ENCODE measurements at regions of chr1 and their contacts with region 1.

Region 1: DNA sequence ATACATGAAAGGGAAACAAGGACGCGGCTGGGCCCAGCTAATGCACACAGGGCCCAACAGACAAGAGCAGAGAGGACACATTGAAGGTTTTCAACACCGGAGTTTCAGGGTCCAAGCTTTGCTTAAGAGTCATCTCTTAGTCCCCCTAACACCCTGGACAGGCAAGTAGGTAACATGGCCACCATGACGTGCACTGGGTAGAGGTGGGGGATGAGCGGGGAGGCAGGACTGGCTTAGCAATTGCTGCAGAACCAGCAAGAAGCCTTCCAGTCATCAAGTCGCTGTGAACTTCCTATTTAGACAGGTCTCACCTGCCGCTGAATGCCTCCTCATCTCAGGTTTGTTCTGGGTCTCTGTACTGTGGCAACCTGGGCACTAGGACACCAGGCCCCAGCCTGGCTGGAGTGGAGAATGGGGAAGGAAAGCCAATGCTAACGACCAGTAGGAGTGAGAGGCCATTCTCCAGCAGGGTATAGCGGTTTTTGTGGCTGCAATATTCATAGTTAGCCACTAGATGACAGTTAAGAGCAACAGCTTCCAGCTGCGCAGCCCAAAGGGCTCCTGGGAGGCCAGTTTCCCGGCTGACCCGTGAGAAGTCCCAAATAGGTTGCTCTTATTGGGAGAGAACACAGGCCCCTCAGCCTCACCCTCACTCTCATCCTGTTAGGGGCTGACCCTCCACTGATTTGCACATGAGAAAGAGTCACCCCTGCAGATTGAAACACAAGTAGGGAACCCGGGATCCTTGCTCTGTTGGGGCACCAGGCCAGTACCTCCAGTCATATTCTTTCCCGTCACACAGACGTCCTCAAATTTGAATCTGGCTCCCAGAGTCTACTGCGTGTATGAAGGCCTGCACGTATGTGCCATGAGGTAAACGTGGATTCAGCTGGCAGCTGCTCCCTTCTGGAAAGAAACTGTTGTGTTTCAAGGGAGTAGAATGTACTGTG is 6.0 kb upstream of the PIGC start:
- DNase-seq: peak; percentile 36 to 70
- H3K4me3 ChIP-seq: no peak overlapping the region
- H3K27ac ChIP-seq: no peak overlapping the region
- H3K4me1 ChIP-seq: no peaks in the 10 kb centered on the region
- H3K27me3 ChIP-seq: peaks cover 0 to 2% (median 0%) of the 10 kb centered on the region in 4 experiments; a peak in 1 of 7 replicates
- CTCF ChIP-seq: peak; percentile 60 to 90 (median 87)
- EP300 ChIP-seq: no peak
- POLR2A ChIP-seq: no peak
- RAD21 ChIP-seq: peak; percentile 80 to 84

Region 2: DNA sequence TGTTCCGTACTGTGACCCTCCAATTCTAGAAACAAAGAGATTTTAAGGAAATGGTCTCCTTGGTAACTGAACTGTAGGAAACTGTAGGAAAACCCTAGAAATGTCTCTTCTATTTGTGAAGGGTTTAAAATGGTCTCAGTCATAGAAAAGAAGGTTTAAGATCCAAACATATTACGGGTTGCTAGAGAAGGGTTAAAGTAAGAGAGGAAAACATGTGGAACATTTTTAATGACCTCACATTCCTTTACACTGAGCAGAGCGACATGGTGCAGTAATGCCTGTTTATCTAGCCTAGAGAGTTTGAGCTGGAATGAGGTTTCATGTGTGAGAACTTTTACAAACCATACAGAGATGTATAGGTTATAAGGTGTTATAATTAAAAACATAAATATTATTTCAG is 66.3 kb before region 1 on chr1:
- CTCF ChIA-PET with region 1: no interaction called
- POLR2A ChIA-PET with region 1: no interaction called
- DNase-seq: no peak
- H3K4me3 ChIP-seq: no peak overlapping the region
- H3K27ac ChIP-seq: no peak overlapping the region
- H3K4me1 ChIP-seq: peaks cover 0 to 7% (median 3%) of the 10 kb centered on the region in 4 experiments; a peak in 5 of 7 replicates
- H3K27me3 ChIP-seq: peaks cover 0 to 1% (median 0%) of the 10 kb centered on the region in 4 experiments; a peak in 1 of 7 replicates
- CTCF ChIP-seq: no peak
- EP300 ChIP-seq: no peak
- POLR2A ChIP-seq: no peak
- RAD21 ChIP-seq: no peak

Region 3: GRCh38 chr1:172460887-172461315 is 11.0 kb after region 1 on chr1:
- CTCF ChIA-PET with region 1: interaction called, 11 read pairs
- POLR2A ChIA-PET with region 1: interaction called, 4 read pairs
- DNase-seq: no peak
- H3K4me3 ChIP-seq: no peak overlapping the region
- H3K27ac ChIP-seq: no peak overlapping the region
- H3K4me1 ChIP-seq: no peaks in the 10 kb centered on the region
- H3K27me3 ChIP-seq: no peaks in the 10 kb centered on the region
- CTCF ChIP-seq: no peak
- EP300 ChIP-seq: no peak
- POLR2A ChIP-seq: no peak
- RAD21 ChIP-seq: no peak